PC-9 (cell line): ENCODE measurements at regions of chr9 and their contacts with region 1.

Region 1: DNA sequence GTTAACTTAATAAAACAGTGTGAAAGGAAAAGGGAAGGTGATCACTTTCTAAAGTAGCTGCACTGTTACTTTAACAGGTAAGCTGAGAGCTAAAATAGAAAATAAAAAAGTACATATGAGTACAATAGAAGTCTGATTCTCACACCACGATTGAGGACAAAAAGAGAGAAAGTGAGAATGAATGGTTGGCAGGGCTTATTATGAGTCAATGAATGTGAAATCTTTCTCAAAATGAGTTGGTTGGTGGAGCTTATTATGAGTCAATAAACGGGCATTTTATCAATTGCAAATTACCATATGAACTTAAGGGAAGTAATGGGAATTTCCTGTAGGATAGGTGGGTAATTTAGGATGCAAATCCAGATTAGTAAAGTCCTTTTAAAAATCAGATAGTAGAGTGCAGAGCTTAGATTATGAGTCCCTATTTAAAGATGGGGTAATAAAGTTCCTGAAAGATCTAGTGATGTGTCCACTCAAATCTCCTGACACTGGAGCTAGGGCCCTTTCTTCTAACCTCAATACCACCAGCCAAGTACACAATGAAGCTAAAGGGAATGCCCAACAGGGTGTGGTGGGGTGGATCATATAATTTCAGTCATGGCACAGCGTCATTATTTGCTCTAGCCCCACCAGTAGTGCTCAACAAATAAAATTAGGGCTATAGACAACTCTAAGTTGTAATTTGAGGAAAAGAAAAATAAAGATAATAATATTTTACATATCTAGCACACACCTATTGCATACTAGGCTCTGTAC is 21.1 kb upstream of the TLR4 start:
- DNase-seq: no peak
- H3K4me3 ChIP-seq: no peak overlapping the region
- H3K27ac ChIP-seq: no peak overlapping the region
- H3K4me1 ChIP-seq: peaks cover 3% of the 10 kb centered on the region; the same call in 1 of the 2 replicates
- H3K27me3 ChIP-seq: no peaks in the 10 kb centered on the region
- CTCF ChIP-seq: no peak

Region 2: GRCh38 chr9:116812231-116813030 is 870.7 kb before region 1 on chr9:
- CTCF ChIA-PET with region 1: interaction called, 12 read pairs
- POLR2A ChIA-PET with region 1: no interaction called
- intact Hi-C with region 1: no loop called
- DNase-seq: no peak
- H3K4me3 ChIP-seq: no peak overlapping the region
- H3K27ac ChIP-seq: no peak overlapping the region
- H3K4me1 ChIP-seq: 0 out of 2 replicates have a peak, but pooled peaks cover 5% of the 10 kb centered on the region
- H3K27me3 ChIP-seq: no peaks in the 10 kb centered on the region
- CTCF ChIP-seq: no peak

Region 3: DNA sequence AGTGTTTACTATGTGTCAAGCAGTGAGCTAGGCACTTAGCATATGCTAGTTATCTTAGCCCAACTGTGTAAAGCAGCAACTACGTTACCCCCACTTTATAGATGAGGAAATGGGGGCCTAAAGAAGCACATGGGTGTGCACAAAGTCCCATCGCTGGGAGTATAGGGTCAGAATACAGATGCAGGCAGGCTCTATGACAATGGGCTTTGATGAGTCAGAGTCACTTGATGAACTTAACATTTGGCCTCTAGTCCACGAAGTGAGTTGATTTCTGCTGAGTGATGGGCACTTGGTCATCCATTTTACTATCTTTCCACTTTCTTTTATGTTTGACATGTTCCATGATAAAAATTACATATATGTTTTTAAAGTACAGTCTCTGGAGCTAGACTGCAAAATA is 791.7 kb before region 1 on chr9:
- CTCF ChIA-PET with region 1: no interaction called
- POLR2A ChIA-PET with region 1: no interaction called
- intact Hi-C with region 1: loop called (anchors 5 kb)
- DNase-seq: no peak
- H3K4me3 ChIP-seq: no peak overlapping the region
- H3K27ac ChIP-seq: no peak overlapping the region
- H3K4me1 ChIP-seq: 0 out of 2 replicates have a peak, but pooled peaks cover 15% of the 10 kb centered on the region
- H3K27me3 ChIP-seq: no peaks in the 10 kb centered on the region
- CTCF ChIP-seq: no peak

Region 4: GRCh38 chr9:118088075-118088474 is 404.9 kb after region 1 on chr9:
- CTCF ChIA-PET with region 1: no interaction called
- POLR2A ChIA-PET with region 1: no interaction called
- intact Hi-C with region 1: no loop called
- DNase-seq: no peak
- H3K4me3 ChIP-seq: no peak overlapping the region
- H3K27ac ChIP-seq: no peak overlapping the region
- H3K4me1 ChIP-seq: no peaks in the 10 kb centered on the region
- H3K27me3 ChIP-seq: no peaks in the 10 kb centered on the region
- CTCF ChIP-seq: no peak